Endothelial cell of umbilical vein (primary cell): ENCODE measurements at regions of chr12 and their contacts with region 1.

Region 1: DNA sequence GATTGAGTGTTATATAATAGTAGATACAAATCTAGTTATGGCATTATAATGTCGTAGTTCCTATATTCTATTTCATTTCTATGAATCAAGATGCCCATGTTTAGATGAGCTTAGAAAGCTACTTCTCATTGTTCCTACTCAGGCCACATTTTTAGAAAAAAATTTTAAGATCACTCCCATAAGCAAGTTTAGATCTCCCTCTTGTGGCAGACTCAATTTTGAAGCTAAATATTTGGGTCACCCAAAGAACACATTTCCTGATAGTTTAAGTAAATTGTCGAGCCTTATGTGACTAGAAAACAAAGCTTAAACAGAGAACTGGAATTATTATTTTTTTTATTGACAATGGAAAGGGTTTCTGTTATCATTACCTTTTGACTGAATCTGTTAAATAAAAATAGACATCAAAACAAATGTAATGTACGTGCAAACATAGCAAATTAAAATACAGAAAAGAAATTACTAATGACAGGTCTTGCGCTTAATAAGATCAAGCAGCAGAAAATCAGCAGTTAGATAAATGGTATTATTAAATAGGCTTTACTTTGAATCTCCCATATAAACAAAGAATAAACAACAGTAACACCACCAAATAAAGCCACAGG is 180.2 kb downstream of the ACSS3 start:
- DNase-seq: peak; percentile 66
- H3K4me3 ChIP-seq: no peak overlapping the region
- H3K27ac ChIP-seq: no peak overlapping the region
- H3K4me1 ChIP-seq: peaks cover 2% of the 10 kb centered on the region
- H3K27me3 ChIP-seq: peaks cover 0 to 3% of the 10 kb centered on the region in 2 experiments
- CTCF ChIP-seq: peak; percentile 13 to 40
- POLR2A ChIP-seq: no peak

Region 2: DNA sequence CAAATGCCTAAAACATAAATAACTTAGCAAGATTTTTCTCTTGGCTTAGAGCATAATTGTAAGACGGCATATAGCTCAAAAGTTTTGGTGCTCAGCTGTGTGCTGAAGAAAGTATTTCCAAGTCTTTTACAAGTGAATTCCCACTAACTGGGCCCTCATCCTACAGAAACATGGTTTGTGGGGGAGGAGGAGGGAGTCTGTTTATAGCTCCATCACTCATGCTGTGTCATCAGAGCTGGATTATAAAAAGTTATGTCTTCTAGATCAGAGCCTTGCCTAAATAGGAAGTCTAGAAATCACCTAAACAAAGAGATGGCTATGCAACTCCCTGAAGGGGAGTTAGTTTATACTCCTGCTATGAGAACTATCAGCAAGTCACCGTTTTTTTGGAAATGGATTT is 1224.6 kb before region 1 on chr12:
- CTCF ChIA-PET with region 1: no interaction called
- POLR2A ChIA-PET with region 1: no interaction called
- dilution Hi-C with region 1: no loop called
- intact Hi-C with region 1: no loop called
- DNase-seq: no peak
- H3K4me3 ChIP-seq: no peak overlapping the region
- H3K27ac ChIP-seq: no peak overlapping the region
- H3K4me1 ChIP-seq: no peaks in the 10 kb centered on the region
- H3K27me3 ChIP-seq: peaks cover 0 to 2% of the 10 kb centered on the region in 2 experiments
- CTCF ChIP-seq: no peak
- POLR2A ChIP-seq: no peak

Region 3: GRCh38 chr12:80472902-80473500 is 785.0 kb before region 1 on chr12:
- CTCF ChIA-PET with region 1: interaction called, 18 read pairs
- POLR2A ChIA-PET with region 1: no interaction called
- dilution Hi-C with region 1: no loop called
- intact Hi-C with region 1: loop called (anchors 2 kb)
- DNase-seq: peak; percentile 65
- H3K4me3 ChIP-seq: no peak overlapping the region
- H3K27ac ChIP-seq: no peak overlapping the region
- H3K4me1 ChIP-seq: no peaks in the 10 kb centered on the region
- H3K27me3 ChIP-seq: no peaks in the 10 kb centered on the region
- CTCF ChIP-seq: peak; percentile 31 to 49
- POLR2A ChIP-seq: no peak

Region 4: GRCh38 chr12:80837348-80837985 is 420.6 kb before region 1 on chr12:
- CTCF ChIA-PET with region 1: interaction called, 123 read pairs
- POLR2A ChIA-PET with region 1: no interaction called
- dilution Hi-C with region 1: no loop called
- intact Hi-C with region 1: loop called (anchors 1 kb)
- DNase-seq: peak; percentile 36
- H3K4me3 ChIP-seq: no peak overlapping the region
- H3K27ac ChIP-seq: no peak overlapping the region
- H3K4me1 ChIP-seq: no peaks in the 10 kb centered on the region
- H3K27me3 ChIP-seq: no peaks in the 10 kb centered on the region
- CTCF ChIP-seq: peak; percentile 66 to 83
- POLR2A ChIP-seq: no peak

Region 5: DNA sequence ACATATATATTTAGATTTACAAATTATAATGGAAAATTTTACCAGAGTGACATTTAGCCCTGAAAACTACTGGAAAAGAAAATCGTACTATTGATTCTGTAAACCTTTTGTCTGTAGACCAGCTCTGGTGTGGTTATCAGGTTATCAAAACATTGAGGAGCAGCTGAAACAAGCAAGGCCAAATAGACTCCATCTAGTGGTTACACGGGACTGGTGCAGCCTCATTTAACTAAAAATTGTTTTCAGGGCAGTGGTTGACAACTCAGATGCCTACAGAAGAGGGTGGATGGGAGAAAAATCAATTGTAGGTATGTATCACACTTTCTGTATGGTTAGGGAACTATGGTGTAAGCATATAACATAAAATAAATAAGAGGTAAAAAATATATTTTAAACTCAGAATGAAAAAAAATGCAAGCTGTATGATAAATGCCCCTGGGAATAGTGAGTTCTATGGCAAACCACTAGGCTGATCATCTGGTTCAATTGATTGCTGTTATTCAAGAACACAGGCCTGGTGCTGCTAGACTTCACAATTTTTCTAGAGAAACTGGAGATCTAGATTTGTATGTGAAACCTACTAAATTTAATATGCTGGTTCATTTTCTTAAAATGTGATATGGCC is 129.0 kb before region 1 on chr12:
- CTCF ChIA-PET with region 1: interaction called, 31 read pairs
- POLR2A ChIA-PET with region 1: no interaction called
- dilution Hi-C with region 1: no loop called
- intact Hi-C with region 1: loop called (anchors 5 kb)
- DNase-seq: peak; percentile 60
- H3K4me3 ChIP-seq: no peak overlapping the region
- H3K27ac ChIP-seq: no peak overlapping the region
- H3K4me1 ChIP-seq: no peaks in the 10 kb centered on the region
- H3K27me3 ChIP-seq: no peaks in the 10 kb centered on the region
- CTCF ChIP-seq: peak; percentile 78 to 81
- POLR2A ChIP-seq: no peak

Region 6: GRCh38 chr12:81274637-81275529 is 16.8 kb after region 1 on chr12:
- CTCF ChIA-PET with region 1: interaction called, 17 read pairs
- POLR2A ChIA-PET with region 1: no interaction called
- dilution Hi-C with region 1: no loop called
- intact Hi-C with region 1: no loop called
- DNase-seq: peak; percentile 22
- H3K4me3 ChIP-seq: no peak overlapping the region
- H3K27ac ChIP-seq: no peak overlapping the region
- H3K4me1 ChIP-seq: no peaks in the 10 kb centered on the region
- H3K27me3 ChIP-seq: peaks cover 0 to 13% of the 10 kb centered on the region in 2 experiments
- CTCF ChIP-seq: no peak
- POLR2A ChIP-seq: no peak